Panc1 (cell line): ENCODE measurements at regions of chr16 and their contacts with region 1.

Region 1: GRCh38 chr16:30813821-30814189 is 26.8 kb upstream of the ZNF629 start:
- DNase-seq: no peak
- ATAC-seq: no peak
- H3K4me3 ChIP-seq: peak overlapping the region; percentile 49 to 65
- H3K27ac ChIP-seq: peak overlapping the region; percentile 89
- H3K4me1 ChIP-seq: no peaks in the 10 kb centered on the region
- H3K27me3 ChIP-seq: no peaks in the 10 kb centered on the region
- CTCF ChIP-seq: no peak

Region 2: DNA sequence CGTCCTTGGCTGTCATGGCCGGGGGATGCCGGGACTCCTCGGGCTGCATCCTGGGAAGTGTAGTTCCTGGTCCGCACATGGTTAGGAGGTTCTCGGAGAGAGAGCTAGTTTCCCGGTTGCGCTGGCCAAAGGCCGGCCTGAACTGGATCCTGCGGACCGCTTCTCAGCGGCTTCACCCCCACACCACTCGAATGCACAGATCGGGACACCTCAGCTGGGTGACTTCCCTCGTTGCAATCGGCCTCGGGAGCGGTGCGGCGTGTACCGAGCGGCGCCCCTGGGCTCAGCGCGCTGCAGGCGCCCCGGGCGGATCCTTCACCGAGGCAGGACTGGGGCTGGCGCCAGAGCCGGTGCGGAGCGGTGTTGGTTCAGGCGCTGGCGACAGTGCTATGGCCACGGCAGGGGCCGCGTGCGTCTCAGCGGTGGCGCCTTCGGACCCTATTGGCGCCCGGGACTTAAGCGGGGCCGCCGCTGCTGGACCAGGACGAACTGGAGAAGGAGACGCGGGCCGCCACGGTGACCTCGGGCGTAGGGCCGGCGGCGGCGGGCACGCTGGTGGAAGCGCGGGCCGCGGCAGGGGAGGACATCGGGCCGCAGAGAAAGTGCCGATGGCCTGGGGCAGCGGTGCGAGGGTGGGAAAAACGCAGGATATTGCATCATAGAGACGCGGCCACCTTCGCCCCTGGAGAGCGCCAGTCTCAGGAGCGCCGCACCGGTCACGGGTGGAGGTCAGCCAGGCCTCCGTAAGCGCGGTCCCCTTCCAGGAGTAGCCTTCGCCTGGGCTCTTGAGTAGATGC is 38.2 kb before region 1 on chr16:
- CTCF ChIA-PET with region 1: no interaction called
- POLR2A ChIA-PET with region 1: no interaction called
- in situ Hi-C with region 1: no loop called
- intact Hi-C with region 1: no loop called
- DNase-seq: peak; percentile 63
- ATAC-seq: peak; percentile 89
- H3K4me3 ChIP-seq: peak overlapping the region; percentile 68 to 94
- H3K27ac ChIP-seq: peak overlapping the region; percentile 98
- H3K4me1 ChIP-seq: peaks cover 17% of the 10 kb centered on the region
- H3K27me3 ChIP-seq: no peaks in the 10 kb centered on the region
- CTCF ChIP-seq: no peak

Region 3: GRCh38 chr16:30927789-30928378 is 114.1 kb after region 1 on chr16:
- CTCF ChIA-PET with region 1: interaction called, 14 read pairs
- POLR2A ChIA-PET with region 1: no interaction called
- in situ Hi-C with region 1: no loop called
- intact Hi-C with region 1: no loop called
- DNase-seq: no peak
- ATAC-seq: peak; percentile 77
- H3K4me3 ChIP-seq: no peak overlapping the region
- H3K27ac ChIP-seq: no peak overlapping the region
- H3K4me1 ChIP-seq: peaks cover 9% of the 10 kb centered on the region
- H3K27me3 ChIP-seq: no peaks in the 10 kb centered on the region
- CTCF ChIP-seq: no peak